ENCODE measurements at regions of chr18 and their contacts with region 1.

Region 1: DNA sequence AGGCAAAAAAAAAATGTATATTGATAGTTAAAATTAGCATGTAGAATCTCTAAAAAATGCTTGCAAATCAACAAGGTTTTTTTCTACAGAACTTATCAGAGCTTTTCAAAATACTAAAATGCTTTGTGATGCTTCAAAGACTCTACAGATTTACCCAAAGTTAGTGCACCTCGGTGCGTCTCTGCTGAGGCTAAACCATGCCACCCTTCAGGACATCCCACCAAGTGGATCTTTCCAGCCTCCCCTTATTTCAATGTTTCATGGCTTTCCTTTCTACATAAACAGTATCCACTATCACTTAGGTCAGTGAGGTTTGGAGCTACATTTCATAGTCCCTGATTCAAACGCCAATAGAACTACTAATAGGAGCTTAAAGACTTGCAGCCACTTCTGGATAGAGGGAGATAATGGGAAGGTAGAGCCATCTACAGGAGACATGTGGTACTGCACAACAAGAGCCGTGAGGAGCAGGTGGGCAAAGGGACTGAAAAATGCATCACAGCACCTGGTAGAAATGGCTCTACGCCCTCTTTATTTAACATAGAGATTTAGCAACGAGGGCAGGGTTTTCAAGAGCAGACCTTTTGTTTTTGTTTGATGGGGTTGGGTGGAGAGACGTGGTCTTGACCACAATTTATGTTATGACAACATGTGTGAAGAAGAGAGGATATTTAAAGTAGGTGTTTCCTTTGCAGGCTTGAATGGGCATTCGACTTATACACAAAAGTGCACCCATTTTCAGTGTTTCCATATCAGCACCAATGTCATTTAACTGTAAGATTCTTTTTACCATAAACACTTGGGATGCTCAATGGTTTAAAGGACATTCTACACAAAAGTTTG is 56.1 kb upstream of the SLC35G4 start:
- DNase-seq: peak in 5 of 9 donors; percentile 7 to 34 (median 25)
- ATAC-seq: peak; percentile 68
- H3K4me3 ChIP-seq: no peak overlapping the region
- H3K4me3 Mint-ChIP-seq: no peak overlapping the region
- H3K27ac ChIP-seq: no peak overlapping the region
- H3K27ac Mint-ChIP-seq: no peak overlapping the region
- H3K4me1 ChIP-seq: no peaks in the 10 kb centered on the region
- H3K4me1 Mint-ChIP-seq: peaks cover 0 to 5% (median 0%) of the 10 kb centered on the region in 7 donors
- H3K27me3 ChIP-seq: peaks cover under 1 to 4% of the 10 kb centered on the region in 2 donors
- H3K27me3 Mint-ChIP-seq: peaks cover 0 to 17% (median 9%) of the 10 kb centered on the region in 5 donors

Region 2: DNA sequence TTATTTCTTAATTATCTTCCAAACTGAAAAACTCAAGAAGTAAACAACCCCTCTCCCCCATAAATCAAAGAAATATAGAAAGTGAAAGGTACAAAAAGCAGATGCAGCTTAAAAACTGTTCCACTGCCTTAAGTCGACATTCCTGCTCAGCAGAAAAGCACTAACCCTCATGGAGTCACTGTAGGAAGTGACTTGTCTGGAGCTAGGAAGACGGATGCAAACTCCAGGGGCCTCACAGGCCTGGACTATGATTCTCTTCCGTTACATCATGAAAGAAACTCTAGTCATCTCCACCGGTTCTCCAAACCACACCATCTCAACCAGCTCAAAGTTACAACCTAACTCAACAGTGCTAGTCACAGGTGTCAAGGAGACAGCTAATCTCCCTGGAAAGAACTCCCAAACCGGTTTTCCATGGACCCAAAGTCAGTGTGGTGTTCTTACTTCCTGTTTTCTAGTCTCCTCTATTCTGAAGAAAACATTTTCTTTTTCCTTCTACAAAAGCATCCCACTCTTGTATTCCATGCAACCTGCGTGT is 532.4 kb before region 1 on chr18:
- CTCF ChIA-PET with region 1: no interaction called
- POLR2A ChIA-PET with region 1: no interaction called
- intact Hi-C with region 1: no loop called
- DNase-seq: no peak
- ATAC-seq: no peak
- H3K4me3 ChIP-seq: no peak overlapping the region
- H3K4me3 Mint-ChIP-seq: no peak overlapping the region
- H3K27ac ChIP-seq: no peak overlapping the region
- H3K27ac Mint-ChIP-seq: no peak overlapping the region
- H3K4me1 ChIP-seq: no peaks in the 10 kb centered on the region
- H3K4me1 Mint-ChIP-seq: no peaks in the 10 kb centered on the region
- H3K27me3 ChIP-seq: no peaks in the 10 kb centered on the region
- H3K27me3 Mint-ChIP-seq: peaks cover 0 to 5% (median 0%) of the 10 kb centered on the region in 5 donors

Region 3: DNA sequence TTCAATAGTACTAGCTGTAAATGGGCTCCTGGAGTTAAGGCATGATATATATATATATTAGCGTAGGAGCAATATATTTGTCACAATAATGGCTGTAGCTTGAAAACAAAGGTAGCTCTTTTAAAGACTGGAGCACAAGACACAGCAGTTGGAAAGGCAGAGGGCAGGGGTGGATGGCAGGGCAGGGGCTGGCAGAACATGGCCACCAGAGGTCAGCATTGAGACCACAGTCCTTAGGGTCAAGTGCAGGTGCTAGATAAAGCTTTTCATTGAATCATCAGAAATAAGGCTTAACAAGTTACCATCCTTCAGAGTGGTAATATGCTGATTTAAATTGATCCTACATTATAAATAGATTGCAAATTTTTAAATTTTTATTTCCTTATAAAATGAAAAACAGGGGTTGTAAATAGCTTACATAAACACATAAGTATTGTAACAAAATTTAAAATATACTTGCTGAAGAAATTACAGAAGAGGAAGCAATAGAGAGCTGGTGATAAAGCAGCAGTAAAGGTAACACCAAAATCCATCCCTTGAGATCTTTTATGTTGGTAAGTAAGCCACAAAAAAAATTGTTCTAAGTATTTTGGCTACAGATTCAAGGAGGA is 242.7 kb before region 1 on chr18:
- CTCF ChIA-PET with region 1: no interaction called
- POLR2A ChIA-PET with region 1: no interaction called
- intact Hi-C with region 1: loop called in 1 of 2 experiments (anchors 1 kb)
- DNase-seq: no peak
- ATAC-seq: no peak
- H3K4me3 ChIP-seq: no peak overlapping the region
- H3K4me3 Mint-ChIP-seq: no peak overlapping the region
- H3K27ac ChIP-seq: no peak overlapping the region
- H3K27ac Mint-ChIP-seq: no peak overlapping the region
- H3K4me1 ChIP-seq: no peaks in the 10 kb centered on the region
- H3K4me1 Mint-ChIP-seq: peaks cover 0 to 6% (median 0%) of the 10 kb centered on the region in 7 donors
- H3K27me3 ChIP-seq: no peaks in the 10 kb centered on the region
- H3K27me3 Mint-ChIP-seq: peaks cover 0 to 12% (median 0%) of the 10 kb centered on the region in 5 donors

Region 4: DNA sequence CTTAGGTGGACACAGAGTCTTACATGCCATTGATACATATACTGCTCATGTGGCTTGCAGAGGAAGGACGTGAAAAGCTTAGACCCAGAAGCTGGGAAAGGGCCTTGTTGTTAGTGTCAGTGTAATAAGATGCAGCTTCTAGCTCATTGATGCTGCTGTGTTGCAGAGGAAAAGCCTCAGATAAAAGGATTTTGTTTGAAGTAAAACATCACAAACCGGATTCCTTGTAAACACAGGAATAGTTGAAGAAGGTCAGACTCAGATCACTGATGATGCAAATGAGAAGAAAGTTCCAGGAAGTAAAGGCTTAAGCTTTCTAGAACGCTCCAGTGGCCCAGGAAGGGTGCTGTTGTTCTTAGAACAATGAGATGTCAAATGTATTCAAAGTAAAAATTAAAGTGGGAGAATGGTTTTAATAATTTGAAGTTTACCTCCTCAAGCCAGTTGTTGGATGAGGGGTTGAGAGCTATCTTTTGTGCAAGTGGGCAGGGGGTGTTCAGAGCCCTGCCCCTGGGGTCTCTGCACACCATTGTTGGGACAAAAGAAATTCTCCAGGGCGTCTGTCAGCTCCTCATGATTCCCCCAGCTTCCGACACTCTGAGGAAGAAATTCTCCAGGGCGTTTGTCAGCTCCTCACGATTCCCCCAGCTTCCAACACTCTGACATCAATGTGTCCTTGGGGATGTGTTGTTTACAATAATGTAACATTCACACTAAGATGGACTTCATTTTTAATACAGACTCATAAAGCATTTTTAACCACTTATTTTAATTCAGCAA is 236.6 kb after region 1 on chr18:
- CTCF ChIA-PET with region 1: no interaction called
- POLR2A ChIA-PET with region 1: no interaction called
- intact Hi-C with region 1: no loop called
- DNase-seq: no peak
- ATAC-seq: no peak
- H3K4me3 ChIP-seq: no peak overlapping the region
- H3K4me3 Mint-ChIP-seq: no peak overlapping the region
- H3K27ac ChIP-seq: no peak overlapping the region
- H3K27ac Mint-ChIP-seq: no peak overlapping the region
- H3K4me1 ChIP-seq: no peaks in the 10 kb centered on the region
- H3K4me1 Mint-ChIP-seq: peaks cover 0 to 3% (median 0%) of the 10 kb centered on the region in 7 donors
- H3K27me3 ChIP-seq: no peaks in the 10 kb centered on the region
- H3K27me3 Mint-ChIP-seq: peaks cover 0 to 18% (median 5%) of the 10 kb centered on the region in 5 donors